ENCODE measurements at regions of chr1 and their contacts with region 1.

Region 1: DNA sequence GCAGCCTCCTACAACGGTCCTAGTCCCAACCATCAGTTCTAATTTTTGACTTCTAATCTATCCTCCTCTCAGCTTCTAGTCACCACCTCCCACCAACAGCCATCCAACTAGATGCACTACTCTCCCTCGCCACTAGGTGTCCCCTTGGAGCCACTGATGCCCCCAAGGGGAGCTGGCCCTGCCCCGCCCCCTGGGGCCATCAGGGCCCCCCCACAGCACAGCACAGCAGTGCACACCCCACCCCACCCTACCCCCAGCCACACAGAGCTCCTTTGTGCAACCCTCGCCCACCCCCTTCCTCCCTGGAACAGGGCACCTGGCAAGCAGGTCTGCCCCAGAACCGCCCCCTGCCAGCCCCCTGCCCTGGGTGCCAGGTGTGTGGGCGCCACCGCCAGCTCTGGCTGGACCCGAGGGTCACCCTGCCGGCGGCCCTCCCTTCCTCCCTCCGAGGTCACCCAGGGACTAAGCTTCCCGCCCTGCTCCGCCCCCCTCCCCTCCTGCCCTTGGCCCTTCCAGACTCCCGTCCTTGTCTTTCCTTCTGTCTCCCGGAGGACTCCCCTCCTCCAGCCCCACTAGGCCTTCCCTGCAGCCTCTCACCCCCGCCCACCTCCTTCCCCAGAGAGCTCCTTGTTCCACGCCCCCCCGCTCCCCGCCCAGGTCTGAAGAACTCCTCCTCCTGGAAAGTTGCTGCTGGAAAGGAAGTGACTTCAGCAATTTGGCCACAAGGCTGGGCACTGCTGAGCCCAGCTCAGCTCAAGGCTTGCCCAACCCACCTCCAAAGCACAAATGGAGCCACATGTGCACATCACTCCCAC is 47.0 kb downstream of the AHDC1 start:
- DNase-seq: peak; percentile 85 to 98
- H3K4me3 ChIP-seq: peak overlapping the region in 1 of 2 donors; percentile 51
- H3K27ac ChIP-seq: peak overlapping the region; percentile 89 to 95
- H3K4me1 ChIP-seq: peaks cover 37 to 61% of the 10 kb centered on the region in 2 donors
- H3K27me3 ChIP-seq: no peaks in the 10 kb centered on the region
- CTCF ChIP-seq: peak; percentile 90 to 98 (median 93)

Region 2: DNA sequence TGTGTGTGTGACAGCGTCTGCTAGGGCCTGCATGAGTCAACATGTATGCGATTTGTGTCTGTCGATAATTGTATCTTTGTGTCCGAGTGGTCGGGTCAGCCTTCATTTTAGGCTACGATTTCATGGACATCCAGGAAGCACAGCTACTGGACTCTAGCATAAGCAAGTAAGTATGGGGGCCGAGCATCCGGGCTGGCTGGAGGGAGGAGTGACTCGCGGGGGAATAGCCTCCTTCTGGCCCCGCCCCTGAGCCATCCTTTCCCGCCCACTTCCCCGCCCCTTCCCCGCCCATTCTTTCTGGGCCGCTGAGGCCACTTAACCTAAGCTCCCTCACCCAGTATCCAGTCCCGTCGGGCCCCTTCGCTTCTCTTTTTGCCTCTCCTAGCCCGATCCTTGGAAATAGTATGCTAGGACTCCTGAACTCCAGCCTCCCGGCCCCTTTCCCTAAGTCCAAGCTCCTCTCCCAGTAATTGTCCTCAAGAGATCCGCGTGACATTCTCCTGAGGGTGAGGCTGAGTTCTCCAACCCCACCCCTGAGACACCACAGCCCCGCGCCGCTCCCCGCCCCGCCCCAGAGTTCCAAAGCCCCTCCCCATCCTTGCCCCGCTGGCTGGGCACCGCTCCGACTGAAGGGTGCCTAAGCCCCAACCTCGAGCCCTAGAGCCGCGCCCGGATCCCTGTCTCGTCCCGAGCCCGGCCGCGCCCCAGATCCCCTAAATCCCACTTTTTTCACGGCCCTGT is 191.4 kb before region 1 on chr1:
- intact Hi-C with region 1: loop called (anchors 1 kb)
- DNase-seq: peak; percentile 66 to 95
- H3K4me3 ChIP-seq: peak overlapping the region; percentile 70 to 96
- H3K27ac ChIP-seq: peak overlapping the region; percentile 97 to 99
- H3K4me1 ChIP-seq: peaks cover 21 to 23% of the 10 kb centered on the region in 2 donors
- H3K27me3 ChIP-seq: no peaks in the 10 kb centered on the region
- CTCF ChIP-seq: no peak

Region 3: GRCh38 chr1:27430903-27431600 is 125.9 kb before region 1 on chr1:
- intact Hi-C with region 1: loop called (anchors 5 kb)
- DNase-seq: peak in 1 of 2 donors; percentile 67
- H3K4me3 ChIP-seq: peak overlapping the region in 1 of 2 donors; percentile 11
- H3K27ac ChIP-seq: peak overlapping the region; percentile 74 to 78
- H3K4me1 ChIP-seq: peaks cover 38 to 87% of the 10 kb centered on the region in 2 donors
- H3K27me3 ChIP-seq: no peaks in the 10 kb centered on the region
- CTCF ChIP-seq: peak in 1 of 3 experiments; percentile 23

Region 4: DNA sequence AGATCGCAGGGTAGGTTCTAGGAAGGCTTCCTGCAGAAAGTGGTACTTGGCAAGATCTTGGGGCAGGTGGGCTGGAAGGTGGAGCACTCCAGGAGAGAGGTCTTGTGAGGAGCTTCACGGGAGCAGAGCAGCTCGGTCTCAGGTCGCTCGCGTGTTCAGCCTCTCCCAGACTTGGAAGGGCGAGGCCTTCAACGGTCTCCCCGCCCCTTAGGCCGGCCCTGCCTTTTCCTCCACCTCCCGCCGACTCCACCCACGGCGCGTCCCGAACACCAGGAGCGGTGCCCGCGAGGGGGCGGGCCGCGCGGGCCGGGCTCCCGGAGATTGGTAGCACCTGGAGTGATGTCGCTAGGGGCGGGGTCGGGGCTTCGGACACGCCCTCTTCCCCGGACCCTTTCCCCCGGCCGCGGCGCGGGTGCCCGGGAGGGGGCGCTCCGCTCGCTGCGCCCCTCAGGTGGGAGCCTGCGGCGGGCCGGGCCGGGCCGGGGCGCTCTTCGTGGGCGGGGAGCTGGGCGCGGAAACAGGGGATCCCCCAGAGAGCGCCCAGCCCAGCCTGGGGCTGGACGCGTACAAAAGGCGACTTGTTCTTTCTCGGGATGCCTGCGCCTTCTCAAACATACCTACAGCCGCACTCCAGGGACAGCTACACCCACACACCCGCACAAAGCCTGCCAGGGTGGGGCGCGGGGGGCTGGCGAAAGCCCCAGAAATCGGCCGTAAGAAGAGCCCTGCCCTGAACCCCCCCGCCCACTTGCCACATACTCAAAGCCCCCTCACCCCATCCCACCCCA is 11.5 kb after region 1 on chr1:
- intact Hi-C with region 1: loop called (anchors 1 kb)
- DNase-seq: peak; percentile 94 to 98
- H3K4me3 ChIP-seq: peak overlapping the region; percentile 42 to 55
- H3K27ac ChIP-seq: peak overlapping the region; percentile 94 to 96
- H3K4me1 ChIP-seq: peaks cover 68 to 97% of the 10 kb centered on the region in 2 donors
- H3K27me3 ChIP-seq: no peaks in the 10 kb centered on the region
- CTCF ChIP-seq: peak; percentile 32 to 81 (median 62)

Region 5: GRCh38 chr1:27574871-27575831 is 18.2 kb after region 1 on chr1:
- intact Hi-C with region 1: loop called (anchors 1 kb)
- DNase-seq: peak in 1 of 2 donors; percentile 90
- H3K4me3 ChIP-seq: peak overlapping the region; percentile 52 to 64
- H3K27ac ChIP-seq: peak overlapping the region; percentile 93 to 96
- H3K4me1 ChIP-seq: peaks cover 60 to 80% of the 10 kb centered on the region in 2 donors
- H3K27me3 ChIP-seq: no peaks in the 10 kb centered on the region
- CTCF ChIP-seq: peak; percentile 30 to 45 (median 30)

Region 6: DNA sequence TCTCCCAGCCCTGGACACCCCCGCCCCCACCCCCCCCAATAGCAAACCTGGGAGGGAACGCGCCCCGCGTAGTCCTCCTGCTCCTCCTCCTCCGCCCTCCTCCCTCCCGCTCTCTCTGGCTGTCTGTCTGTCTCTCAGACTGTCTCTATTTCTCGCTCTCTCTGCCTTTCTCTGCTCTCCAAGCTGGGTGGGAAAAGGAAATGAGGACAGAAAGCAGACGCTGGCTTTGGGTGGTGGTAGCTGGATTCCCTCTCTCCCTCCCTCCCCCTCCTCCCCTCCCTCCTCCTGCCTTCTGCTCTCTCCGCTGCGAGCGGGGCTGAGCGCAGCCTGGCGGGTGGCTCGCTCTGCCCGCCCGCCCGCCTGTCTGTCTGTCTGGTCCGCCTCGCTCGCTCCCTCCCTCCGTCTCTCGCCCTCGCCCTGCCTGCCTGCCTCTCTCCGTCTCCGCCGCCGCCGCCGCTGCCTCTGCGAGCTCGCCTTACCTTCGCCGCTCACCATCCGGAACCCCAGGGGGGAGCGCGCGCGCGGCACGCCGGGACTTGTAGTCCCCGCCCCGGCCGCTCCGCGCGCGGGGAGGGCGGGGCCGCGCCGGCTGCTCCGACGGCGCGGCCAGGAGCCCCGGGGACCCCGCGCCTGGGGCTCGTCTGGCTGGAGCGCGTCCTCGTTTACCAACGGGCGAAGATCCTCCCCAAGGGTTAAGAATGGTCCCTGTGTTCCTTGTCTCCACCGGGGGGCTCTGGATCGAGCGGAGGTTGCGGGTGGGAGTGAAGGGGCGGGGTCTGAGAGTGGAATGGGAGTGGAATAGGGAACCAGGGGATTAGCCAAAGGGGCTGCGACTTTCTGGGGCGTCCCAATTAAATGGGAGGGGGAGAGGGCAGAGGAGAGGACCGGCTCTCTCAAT is 46.9 kb after region 1 on chr1 and contains the start of gene AHDC1:
- intact Hi-C with region 1: loop called (anchors 1 kb)
- DNase-seq: peak; percentile 74 to 95
- H3K4me3 ChIP-seq: peak within 1 kb of the TSS; percentile 74 to 91
- H3K27ac ChIP-seq: peak within 1 kb of the TSS; percentile 89 to 91
- H3K4me1 ChIP-seq: peaks cover 25 to 32% of the 10 kb centered on the region in 2 donors
- H3K27me3 ChIP-seq: no peaks in the 10 kb centered on the region
- CTCF ChIP-seq: peak in 2 of 3 experiments; percentile 32 to 38
- total RNA-seq, gene AHDC1: 205 TPM

Region 7: DNA sequence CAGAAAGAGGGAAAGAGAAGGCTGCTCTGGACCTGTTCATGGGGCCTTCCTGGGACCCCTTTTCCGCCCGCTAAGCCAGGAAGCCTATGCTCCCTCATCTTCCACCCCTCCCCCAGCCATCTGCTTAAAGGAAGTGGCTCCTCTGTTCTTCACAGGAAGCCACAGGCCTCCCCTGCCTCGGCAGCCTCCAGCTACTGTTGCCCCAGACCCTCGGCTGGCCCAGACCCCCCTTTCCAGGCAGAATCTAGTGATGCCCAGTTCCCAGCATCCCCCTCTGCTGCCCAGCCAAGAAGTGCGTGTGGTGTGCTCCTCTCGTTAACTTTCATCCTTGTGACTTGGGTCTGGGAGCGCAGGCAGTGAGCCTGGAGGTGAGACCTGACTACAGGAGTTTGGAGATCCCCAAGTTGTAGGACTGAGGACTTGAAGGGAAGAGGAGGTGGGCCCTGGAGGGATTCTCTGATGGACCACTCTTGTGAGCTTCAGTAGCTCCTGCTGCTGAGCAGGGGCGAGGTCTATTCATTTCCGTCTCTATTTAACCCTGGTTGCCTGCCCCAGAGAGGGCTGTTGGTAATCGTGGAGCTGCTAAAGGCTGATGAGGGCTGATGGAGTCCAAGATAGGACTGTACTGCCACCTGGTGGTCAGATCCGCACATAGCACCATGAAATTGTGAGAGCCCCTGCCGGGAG is 105.9 kb after region 1 on chr1:
- intact Hi-C with region 1: loop called (anchors 2 kb)
- DNase-seq: peak; percentile 39 to 93
- H3K4me3 ChIP-seq: no peak overlapping the region
- H3K27ac ChIP-seq: peak overlapping the region; percentile 35 to 39
- H3K4me1 ChIP-seq: peaks cover 4 to 20% of the 10 kb centered on the region in 2 donors
- H3K27me3 ChIP-seq: no peaks in the 10 kb centered on the region
- CTCF ChIP-seq: peak; percentile 83 to 97 (median 83)

Region 8: DNA sequence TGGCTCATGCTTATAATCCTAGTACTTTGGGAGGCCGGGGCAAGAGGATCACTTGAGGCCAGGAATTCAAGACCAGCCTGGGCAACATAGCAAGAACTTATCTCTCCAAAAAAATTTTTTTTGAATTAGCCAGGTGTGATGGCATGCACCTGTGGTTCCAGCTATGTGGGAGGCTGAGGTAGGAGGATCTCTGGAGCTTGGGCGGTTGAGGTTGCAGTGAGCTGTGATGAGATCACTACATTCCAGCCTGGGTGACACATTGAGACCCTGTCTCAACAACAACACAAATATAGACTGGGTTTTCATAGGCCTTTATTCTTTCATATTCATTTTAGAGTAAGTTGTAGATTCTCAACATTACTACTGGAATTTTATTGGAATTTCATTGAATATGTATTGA is 784.6 kb after region 1 on chr1:
- intact Hi-C with region 1: no loop called
- DNase-seq: no peak
- H3K4me3 ChIP-seq: no peak overlapping the region
- H3K27ac ChIP-seq: no peak overlapping the region
- H3K4me1 ChIP-seq: no peaks in the 10 kb centered on the region
- H3K27me3 ChIP-seq: no peaks in the 10 kb centered on the region
- CTCF ChIP-seq: no peak

Region 9: GRCh38 chr1:29444782-29445729 is 1888.1 kb after region 1 on chr1:
- intact Hi-C with region 1: no loop called
- DNase-seq: peak in 1 of 2 donors; percentile 49
- H3K4me3 ChIP-seq: no peak overlapping the region
- H3K27ac ChIP-seq: no peak overlapping the region
- H3K4me1 ChIP-seq: no peaks in the 10 kb centered on the region
- H3K27me3 ChIP-seq: no peaks in the 10 kb centered on the region
- CTCF ChIP-seq: no peak